Ovary (tissue), 10 donors: ENCODE measurements at regions of chr19 and their contacts with region 1.

Region 1: DNA sequence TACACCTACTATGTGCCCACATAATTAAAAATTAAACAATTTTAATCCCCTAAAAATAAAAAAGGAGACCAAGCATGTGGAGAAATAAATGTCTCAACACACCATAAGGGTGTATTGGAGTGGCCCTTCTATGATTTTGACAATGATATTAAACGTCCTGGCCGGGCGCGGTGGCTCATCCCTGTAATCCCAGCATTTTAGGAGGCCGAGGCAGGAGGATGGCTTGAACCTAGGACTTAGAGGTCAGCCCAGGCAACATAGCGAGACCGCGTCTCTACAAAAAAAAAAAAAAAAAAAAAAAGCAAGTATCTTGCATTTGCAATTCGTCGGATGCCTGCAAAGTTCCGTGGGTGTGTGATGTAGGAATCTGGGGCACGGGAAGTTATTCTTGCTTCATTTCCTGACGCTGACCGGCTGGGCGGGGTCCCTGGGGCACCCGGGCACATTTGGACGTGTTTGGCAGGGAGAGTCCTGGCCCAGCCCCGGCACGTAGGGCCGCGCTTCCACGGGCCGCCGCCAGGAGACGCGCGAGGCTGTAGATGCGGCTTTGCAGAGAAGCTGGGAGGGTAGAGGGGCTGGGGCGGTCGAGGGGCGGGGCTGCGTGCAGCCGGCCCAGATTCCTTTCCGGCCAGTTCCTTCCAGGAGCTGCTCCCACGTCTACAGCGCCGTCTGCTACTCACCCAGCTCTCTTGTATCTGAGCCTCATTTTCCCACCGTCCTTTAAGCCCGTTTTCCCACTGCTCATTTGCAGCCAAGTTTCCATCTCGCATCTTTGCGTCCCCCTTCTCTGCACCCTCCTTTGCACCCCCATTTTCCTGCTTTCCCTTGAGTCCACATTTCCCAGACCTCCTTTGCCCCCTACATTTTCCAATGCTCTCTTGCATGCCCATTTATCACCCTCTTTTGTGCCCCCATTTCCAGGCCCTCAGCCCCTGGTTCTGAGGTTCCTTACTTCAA is 2.2 kb upstream of the TSPAN16 start:
- DNase-seq: peak; percentile 91 to 97 (median 93)
- H3K4me3 ChIP-seq: peak overlapping the region; percentile 13
- H3K27ac ChIP-seq: no peak overlapping the region
- H3K4me1 ChIP-seq: no peaks in the 10 kb centered on the region
- H3K27me3 ChIP-seq: no peaks in the 10 kb centered on the region
- CTCF ChIP-seq: peak; percentile 85 to 98 (median 97)
- EP300 ChIP-seq: no peak
- POLR2A ChIP-seq: no peak

Region 2: DNA sequence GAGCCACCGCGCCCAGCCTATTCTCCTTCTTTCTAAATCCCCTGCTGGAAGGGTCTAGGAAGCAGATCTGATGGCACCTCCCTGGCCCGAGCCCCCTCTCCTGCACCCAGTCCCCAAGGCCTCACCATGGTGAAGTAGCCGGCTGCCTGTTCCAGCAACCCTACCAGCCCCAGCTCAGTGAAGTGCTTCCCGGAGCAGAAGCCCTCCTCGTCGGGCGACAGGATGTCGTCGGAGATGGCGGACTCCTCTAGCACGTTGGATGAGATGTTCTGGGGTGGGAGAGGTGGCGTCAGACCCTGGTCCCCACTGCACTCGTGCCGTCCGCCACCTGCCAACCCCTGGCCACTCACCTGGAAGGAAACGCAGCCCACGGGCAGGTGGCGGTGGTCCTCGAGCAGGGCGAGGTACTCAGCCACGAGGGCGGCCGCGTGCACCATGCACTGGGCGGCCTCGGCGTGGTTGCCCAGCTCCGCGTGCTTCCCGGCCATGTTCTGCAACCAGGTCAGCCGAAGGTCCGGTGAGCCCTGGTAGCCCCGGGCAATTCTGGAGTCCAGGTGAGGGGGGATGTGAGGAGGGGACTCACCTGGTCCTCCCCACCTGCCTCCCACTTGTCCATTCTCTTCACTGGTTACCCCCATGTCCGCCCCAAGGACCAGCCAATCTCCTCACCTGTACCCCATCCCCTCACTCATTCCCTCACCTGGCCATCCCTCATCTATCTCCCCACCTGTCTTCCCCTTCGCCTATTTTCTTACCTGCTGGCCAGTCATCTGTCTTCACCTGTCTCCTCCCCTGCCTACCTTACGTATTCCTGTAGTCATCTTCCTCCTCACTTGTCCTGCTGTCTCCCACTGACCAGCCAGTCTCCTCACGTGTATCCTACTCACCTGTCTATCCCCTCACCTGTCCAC is 84.9 kb before region 1 on chr19:
- intact Hi-C with region 1: no loop called
- DNase-seq: no peak
- H3K4me3 ChIP-seq: no peak overlapping the region
- H3K27ac ChIP-seq: no peak overlapping the region
- H3K4me1 ChIP-seq: peaks cover 5% of the 10 kb centered on the region
- H3K27me3 ChIP-seq: no peaks in the 10 kb centered on the region
- CTCF ChIP-seq: no peak
- EP300 ChIP-seq: no peak
- POLR2A ChIP-seq: no peak

Region 3: DNA sequence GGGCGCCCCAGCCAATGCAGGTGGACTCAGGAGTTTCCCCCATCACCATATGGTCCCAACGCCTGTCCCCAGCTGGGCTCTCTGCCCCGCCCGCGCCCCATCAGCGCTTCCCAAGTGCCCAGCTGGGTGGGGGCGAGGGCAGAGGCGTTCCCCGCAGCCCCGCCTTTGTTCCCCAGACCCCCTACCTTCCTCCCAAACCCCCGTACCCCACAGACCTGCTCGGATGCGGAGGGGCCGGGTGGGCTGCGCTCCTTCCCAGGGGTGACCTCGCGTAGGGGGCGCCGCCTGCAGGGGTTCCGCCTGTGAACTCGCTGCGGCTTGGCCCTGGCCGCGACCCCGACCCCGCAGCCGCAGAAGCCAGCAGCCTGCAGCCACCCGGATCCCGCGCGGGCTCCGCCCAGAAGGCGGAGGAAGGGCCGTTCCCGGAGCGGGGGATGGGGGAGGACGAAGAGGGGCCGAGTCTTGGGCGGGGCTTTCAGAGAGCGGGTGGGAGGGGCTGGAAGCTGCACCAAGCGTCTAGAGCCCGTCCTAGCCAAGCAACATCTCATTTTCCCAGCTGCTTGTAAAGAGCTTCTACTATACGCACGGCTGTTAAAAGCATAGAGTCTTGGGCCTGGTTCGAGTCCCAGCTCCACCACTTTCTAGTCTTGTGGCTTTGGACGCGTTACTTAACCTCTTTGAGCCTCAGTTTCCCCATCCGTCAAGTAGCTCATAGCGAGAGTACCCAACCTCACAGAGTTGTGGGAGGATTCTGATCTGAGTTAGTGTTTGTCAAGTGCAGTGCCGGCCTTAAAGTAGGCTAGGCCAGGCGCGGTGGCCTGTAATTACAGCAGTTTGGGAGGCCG is 45.8 kb after region 1 on chr19 and contains the start of gene RAB3D:
- intact Hi-C with region 1: loop called in 1 of 4 experiments (anchors 5 kb)
- DNase-seq: peak; percentile 92 to 95 (median 94)
- H3K4me3 ChIP-seq: peak within 1 kb of the TSS; percentile 95
- H3K27ac ChIP-seq: peak within 1 kb of the TSS; percentile 78 to 80
- H3K4me1 ChIP-seq: peaks cover 8% of the 10 kb centered on the region
- H3K27me3 ChIP-seq: no peaks in the 10 kb centered on the region
- CTCF ChIP-seq: no peak
- EP300 ChIP-seq: no peak
- POLR2A ChIP-seq: no peak
- total RNA-seq, gene RAB3D: 6.8 to 27.2 (median 17.3) TPM

Region 4: GRCh38 chr19:11380653-11381534 is 87.2 kb after region 1 on chr19:
- intact Hi-C with region 1: loop called in 1 of 4 experiments (anchors 5 kb)
- DNase-seq: peak; percentile 94 to 97 (median 96)
- H3K4me3 ChIP-seq: peak overlapping the region; percentile 83
- H3K27ac ChIP-seq: peak overlapping the region; percentile 55 to 63
- H3K4me1 ChIP-seq: peaks cover 15% of the 10 kb centered on the region
- H3K27me3 ChIP-seq: no peaks in the 10 kb centered on the region
- CTCF ChIP-seq: peak; percentile 66 to 95 (median 92)
- EP300 ChIP-seq: no peak
- POLR2A ChIP-seq: peak; percentile 80

Region 5: GRCh38 chr19:11399667-11400066 is 106.0 kb after region 1 on chr19:
- intact Hi-C with region 1: loop called in 1 of 4 experiments (anchors 10 kb)
- DNase-seq: no peak
- H3K4me3 ChIP-seq: no peak overlapping the region
- H3K27ac ChIP-seq: no peak overlapping the region
- H3K4me1 ChIP-seq: no peaks in the 10 kb centered on the region
- H3K27me3 ChIP-seq: no peaks in the 10 kb centered on the region
- CTCF ChIP-seq: no peak
- EP300 ChIP-seq: no peak
- POLR2A ChIP-seq: no peak

Region 6: GRCh38 chr19:11446652-11447301 is 153.1 kb after region 1 on chr19:
- intact Hi-C with region 1: loop called in 2 of 4 experiments (anchors 10 kb)
- DNase-seq: peak in 4 of 5 donors; percentile 56 to 69 (median 64)
- H3K4me3 ChIP-seq: no peak overlapping the region
- H3K27ac ChIP-seq: peak overlapping the region in 1 of 2 donors; percentile 19
- H3K4me1 ChIP-seq: peaks cover 1% of the 10 kb centered on the region
- H3K27me3 ChIP-seq: no peaks in the 10 kb centered on the region
- CTCF ChIP-seq: peak; percentile 31 to 75 (median 46)
- EP300 ChIP-seq: no peak
- POLR2A ChIP-seq: no peak

Region 7: DNA sequence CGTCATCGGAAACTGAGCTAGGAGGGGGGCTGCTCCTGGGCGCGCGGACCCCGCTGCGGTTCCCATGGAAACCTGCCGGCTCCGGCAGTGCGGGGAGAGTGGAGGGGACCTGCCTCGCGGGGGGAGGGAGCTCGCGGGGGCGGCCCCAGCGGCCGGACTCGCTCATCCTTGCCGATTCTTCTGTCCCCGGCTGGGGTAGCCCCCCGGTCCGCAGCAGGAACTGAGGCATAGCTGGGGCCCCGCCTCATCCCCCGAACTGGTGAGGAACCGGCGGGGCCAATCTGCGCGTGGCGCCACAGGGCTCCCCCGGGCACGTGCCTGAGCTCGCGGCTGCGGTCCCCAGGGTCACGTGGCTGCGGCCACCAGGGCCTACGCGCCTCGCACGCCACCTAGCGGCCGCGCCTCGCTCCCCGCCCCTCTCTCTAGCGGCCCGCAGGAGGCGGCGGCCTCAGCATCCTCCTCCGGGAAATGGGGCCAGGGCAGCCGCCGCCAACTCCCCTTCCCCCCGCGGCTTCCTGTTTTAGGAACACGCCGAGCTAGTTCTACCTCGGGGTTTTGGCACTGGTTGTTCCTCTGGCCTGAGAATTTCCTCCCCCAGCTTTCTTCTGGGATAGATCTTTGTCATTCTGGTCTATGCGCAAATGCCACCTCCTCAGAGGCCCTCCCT is 188.8 kb after region 1 on chr19:
- intact Hi-C with region 1: loop called in 2 of 4 experiments (anchors 2 to 10 kb)
- DNase-seq: peak; percentile 67 to 85 (median 75)
- H3K4me3 ChIP-seq: no peak overlapping the region
- H3K27ac ChIP-seq: no peak overlapping the region
- H3K4me1 ChIP-seq: peaks cover 11% of the 10 kb centered on the region
- H3K27me3 ChIP-seq: peaks cover 11% of the 10 kb centered on the region
- CTCF ChIP-seq: peak; percentile 81 to 97 (median 94)
- EP300 ChIP-seq: no peak
- POLR2A ChIP-seq: no peak

Region 8: DNA sequence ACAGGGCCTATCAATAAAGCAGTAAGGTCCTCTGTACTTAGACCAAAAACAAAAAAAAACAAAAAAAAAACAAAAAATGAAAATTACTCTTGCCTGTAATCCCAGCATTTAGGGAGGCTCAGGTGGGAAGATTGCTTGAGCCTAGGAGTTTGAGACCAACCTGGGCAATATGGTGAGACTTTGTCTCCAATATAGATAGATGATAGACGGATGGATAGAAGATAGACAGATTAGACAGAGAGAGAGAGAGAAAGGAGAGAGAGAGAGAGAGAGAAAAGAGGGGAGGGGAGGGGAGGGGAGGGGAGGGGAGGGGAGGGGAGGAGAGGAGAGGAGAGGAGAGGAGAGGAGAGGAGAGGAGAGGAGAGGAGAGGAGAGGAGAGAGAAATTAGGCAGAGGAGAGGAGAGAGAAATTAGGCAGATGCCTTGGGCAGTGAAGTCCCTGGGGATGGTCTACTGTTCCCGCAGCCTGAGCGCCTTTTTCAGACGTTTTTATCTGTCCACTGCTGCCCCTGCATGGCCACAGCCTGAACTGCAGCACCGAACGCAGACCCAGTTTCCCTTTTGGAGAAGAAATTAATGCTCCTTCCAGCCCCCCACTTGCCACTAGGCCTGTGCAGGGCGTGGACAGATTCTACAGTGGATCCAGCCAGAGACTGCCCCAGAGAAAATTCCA is 293.7 kb after region 1 on chr19:
- intact Hi-C with region 1: loop called in 1 of 4 experiments (anchors 10 kb)
- DNase-seq: peak; percentile 69 to 87 (median 82)
- H3K4me3 ChIP-seq: no peak overlapping the region
- H3K27ac ChIP-seq: no peak overlapping the region
- H3K4me1 ChIP-seq: no peaks in the 10 kb centered on the region
- H3K27me3 ChIP-seq: no peaks in the 10 kb centered on the region
- CTCF ChIP-seq: peak; percentile 76 to 89 (median 83)
- EP300 ChIP-seq: no peak
- POLR2A ChIP-seq: no peak